ENCODE measurements at regions of chr11 and their contacts with region 1.

Region 1: GRCh38 chr11:15074206-15075161 is 1.1 kb downstream of the CALCB start:
- DNase-seq: peak; percentile 69 to 89 (median 77)
- ATAC-seq: peak; percentile 90 to 95 (median 92)
- H3K4me3 ChIP-seq: peak overlapping the region; percentile 2 to 43 (median 33)
- H3K27ac ChIP-seq: no peak overlapping the region
- H3K4me1 ChIP-seq: peaks cover 0 to 21% (median 13%) of the 10 kb centered on the region in 12 donors
- H3K27me3 ChIP-seq: peaks cover 9 to 56% (median 33%) of the 10 kb centered on the region in 9 donors
- CTCF ChIP-seq: peak; percentile 56 to 79 (median 66)
- POLR2A ChIP-seq: no peak

Region 2: DNA sequence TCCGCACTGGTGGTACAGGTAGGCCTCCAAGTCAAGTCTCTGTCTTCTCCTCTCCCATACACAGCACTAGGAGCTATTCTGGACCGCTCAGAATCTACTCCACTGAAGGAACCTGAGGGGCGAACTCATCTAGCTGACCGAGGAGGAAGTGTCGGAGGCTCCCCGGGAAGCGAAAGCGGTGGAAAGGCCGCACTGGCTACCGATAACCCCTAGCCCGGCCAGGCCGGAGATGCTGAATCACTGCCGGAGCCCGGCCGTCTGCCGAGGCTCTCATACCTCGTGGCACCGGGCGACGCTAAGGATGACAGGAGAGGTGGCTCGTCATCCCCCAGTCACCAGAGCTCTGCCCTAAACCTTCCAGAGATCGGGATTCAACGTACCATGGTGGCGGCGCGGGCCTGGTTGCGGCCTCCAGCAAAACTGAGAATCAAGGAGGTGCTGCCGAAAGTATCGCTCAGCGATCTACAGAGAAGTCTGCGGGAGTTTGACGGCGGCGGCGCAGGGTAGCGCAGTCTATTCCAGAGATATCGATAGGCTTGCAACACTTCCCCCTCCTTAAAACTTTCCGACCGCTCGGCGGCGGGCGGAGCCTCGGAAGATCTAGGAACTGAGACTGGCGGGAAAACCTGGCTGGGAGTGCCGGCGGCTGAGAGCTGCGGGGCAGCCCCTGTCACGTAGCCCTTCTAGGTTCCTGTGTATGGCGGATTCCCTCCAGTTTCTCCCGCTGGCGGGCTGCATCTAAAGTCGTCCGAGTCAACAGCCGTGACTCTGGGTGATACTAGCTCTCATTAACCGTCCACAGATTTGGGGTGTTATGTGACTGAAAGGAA is 554.4 kb before region 1 on chr11 and contains the start of gene PSMA1:
- intact Hi-C with region 1: loop called in 1 of 10 experiments (anchors 10 kb)
- DNase-seq: peak; percentile 94 to 96 (median 95)
- ATAC-seq: peak; percentile 98
- H3K4me3 ChIP-seq: peak within 1 kb of the TSS; percentile 55 to 99 (median 81)
- H3K27ac ChIP-seq: peak within 1 kb of the TSS; percentile 69 to 96 (median 88)
- H3K4me1 ChIP-seq: peaks cover 5 to 24% (median 15%) of the 10 kb centered on the region in 12 donors
- H3K27me3 ChIP-seq: no peaks in the 10 kb centered on the region
- CTCF ChIP-seq: peak in 11 of 12 donors; percentile 16 to 59 (median 43)
- POLR2A ChIP-seq: peak in 1 of 2 donors; percentile 77
- total RNA-seq, gene PSMA1: 95.5 to 136 (median 129) TPM

Region 3: GRCh38 chr11:14537134-14537599 is 537.3 kb before region 1 on chr11:
- intact Hi-C with region 1: loop called in 4 of 10 experiments (anchors 5 to 10 kb)
- DNase-seq: no peak
- ATAC-seq: no peak
- H3K4me3 ChIP-seq: peak overlapping the region in 1 of 12 donors; percentile 23
- H3K27ac ChIP-seq: peak overlapping the region in 4 of 12 donors; percentile 42 to 74 (median 54)
- H3K4me1 ChIP-seq: peaks cover 0 to 45% (median 29%) of the 10 kb centered on the region in 12 donors
- H3K27me3 ChIP-seq: no peaks in the 10 kb centered on the region
- CTCF ChIP-seq: peak; percentile 66 to 86 (median 78)
- POLR2A ChIP-seq: no peak

Region 4: GRCh38 chr11:14914541-14914940 is 159.9 kb before region 1 on chr11:
- intact Hi-C with region 1: loop called in 9 of 10 experiments (anchors 2 to 5 kb)
- DNase-seq: no peak
- ATAC-seq: no peak
- H3K4me3 ChIP-seq: no peak overlapping the region
- H3K27ac ChIP-seq: no peak overlapping the region
- H3K4me1 ChIP-seq: no peaks in the 10 kb centered on the region
- H3K27me3 ChIP-seq: no peaks in the 10 kb centered on the region
- CTCF ChIP-seq: no peak
- POLR2A ChIP-seq: no peak

Region 5: DNA sequence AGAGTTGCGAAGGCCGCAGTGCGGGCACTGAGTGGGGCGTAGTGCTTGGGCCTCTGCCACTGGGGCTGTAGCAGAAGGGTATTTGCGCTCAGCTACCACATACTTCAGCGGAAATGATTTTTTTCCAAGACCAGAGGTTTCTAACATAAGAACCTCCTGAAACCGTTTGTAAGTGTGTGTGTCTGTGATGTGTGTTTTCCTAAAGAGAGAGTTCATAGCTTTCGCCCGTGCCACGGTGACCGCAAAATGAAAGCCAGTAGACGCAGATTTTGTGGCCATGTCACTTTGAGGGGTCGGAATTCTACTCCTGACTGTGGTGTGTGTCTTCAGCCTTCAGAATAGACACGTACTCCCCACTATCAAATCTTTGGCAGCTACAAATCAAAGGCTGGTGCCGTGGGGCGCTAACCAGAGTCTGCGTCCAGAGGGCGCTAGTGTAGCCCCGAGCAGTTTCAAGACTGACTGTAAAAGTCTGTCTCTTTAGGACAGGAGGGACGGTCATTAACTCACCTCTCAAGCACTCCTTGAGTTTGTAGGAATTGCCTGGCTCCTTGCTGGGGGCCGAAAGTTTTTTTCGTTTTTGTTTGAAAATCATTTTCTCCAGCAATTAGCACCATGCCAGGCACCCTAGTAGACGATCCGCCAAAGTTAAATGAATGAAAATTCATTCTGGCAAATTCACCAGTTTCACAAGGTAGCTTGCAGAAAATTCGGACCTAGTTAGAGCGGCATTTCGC is 99.8 kb before region 1 on chr11:
- intact Hi-C with region 1: loop called in 6 of 10 experiments (anchors 2 to 5 kb)
- DNase-seq: peak in 3 of 5 donors; percentile 38 to 61 (median 44)
- ATAC-seq: peak in 3 of 4 donors; percentile 60 to 81 (median 67)
- H3K4me3 ChIP-seq: peak overlapping the region in 10 of 12 donors; percentile 14 to 47 (median 35)
- H3K27ac ChIP-seq: no peak overlapping the region
- H3K4me1 ChIP-seq: peaks cover 0 to 36% (median 14%) of the 10 kb centered on the region in 12 donors
- H3K27me3 ChIP-seq: peaks cover 30 to 92% (median 66%) of the 10 kb centered on the region in 9 donors
- CTCF ChIP-seq: peak; percentile 23 to 61 (median 46)
- POLR2A ChIP-seq: no peak

Region 6: DNA sequence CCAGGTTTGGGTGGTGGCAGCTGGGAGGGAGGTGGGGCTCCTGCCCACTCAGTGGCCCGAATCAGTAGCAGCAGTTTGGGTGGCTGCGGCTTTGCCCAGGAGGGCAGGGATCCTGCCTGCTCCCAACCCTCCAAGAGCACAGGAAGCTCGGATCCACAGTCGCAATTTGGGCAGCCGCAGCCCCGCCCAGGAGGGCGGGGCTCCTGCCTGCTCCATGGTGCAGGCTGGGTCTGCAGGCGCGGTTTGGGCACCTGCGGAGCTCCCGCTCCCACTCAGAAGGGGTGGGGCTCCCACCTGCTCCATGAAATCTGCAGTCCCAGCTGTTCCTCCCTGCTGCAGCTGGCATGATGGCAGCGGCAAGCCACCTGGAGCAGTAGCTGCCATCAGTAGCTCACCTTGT is 39.2 kb before region 1 on chr11:
- intact Hi-C with region 1: no loop called
- DNase-seq: no peak
- ATAC-seq: no peak
- H3K4me3 ChIP-seq: no peak overlapping the region
- H3K27ac ChIP-seq: no peak overlapping the region
- H3K4me1 ChIP-seq: no peaks in the 10 kb centered on the region
- H3K27me3 ChIP-seq: peaks cover 0 to 10% (median 4%) of the 10 kb centered on the region in 9 donors
- CTCF ChIP-seq: no peak
- POLR2A ChIP-seq: no peak

Region 7: DNA sequence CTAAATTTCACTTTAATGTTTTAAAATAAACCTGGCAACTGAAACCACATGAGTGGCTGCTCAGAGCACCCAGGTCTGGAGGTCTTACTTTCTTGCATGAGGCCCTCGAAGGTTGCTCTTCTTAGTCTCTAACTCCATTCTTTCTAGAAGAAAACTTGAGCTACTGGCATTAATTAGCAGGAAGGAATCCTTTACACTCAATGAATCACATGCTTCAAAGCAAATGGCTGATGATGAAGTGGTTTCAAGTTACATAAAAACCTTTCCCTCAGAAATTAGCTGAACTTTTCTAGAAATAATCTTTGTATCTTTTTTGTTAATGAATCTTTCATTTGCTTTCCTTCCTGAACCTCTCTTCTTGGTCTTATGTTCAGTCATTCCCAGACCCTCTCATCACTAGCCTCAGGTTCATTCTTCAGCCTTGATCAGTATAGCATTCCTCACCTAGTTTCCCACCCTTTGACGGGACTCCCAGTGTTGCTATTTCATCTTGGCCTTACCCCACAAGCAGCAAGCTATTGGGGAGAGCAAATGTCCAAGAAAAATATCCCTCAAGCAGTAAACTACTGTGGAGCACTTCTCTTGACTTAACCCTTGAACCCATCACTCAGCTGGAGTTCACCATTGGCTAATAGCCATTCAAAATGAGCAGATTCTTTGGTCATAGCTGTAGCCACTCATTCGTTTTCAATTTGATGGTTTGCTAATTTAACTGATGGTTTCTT is 115.3 kb after region 1 on chr11:
- intact Hi-C with region 1: no loop called
- DNase-seq: no peak
- ATAC-seq: no peak
- H3K4me3 ChIP-seq: no peak overlapping the region
- H3K27ac ChIP-seq: no peak overlapping the region
- H3K4me1 ChIP-seq: no peaks in the 10 kb centered on the region
- H3K27me3 ChIP-seq: no peaks in the 10 kb centered on the region
- CTCF ChIP-seq: no peak
- POLR2A ChIP-seq: no peak